HepG2 (cell line): ENCODE measurements at regions of chrX and their contacts with region 1.

Region 1: GRCh38 chrX:153927922-153928760 is 2.1 kb upstream of the ARHGAP4 start:
- DNase-seq: peak; percentile 90
- ATAC-seq: peak; percentile 89
- H3K4me3 ChIP-seq: peak overlapping the region; percentile 71 to 79 (median 76)
- H3K27ac ChIP-seq: peak overlapping the region; percentile 89
- H3K4me1 ChIP-seq: peaks cover 52% of the 10 kb centered on the region
- H3K27me3 ChIP-seq: no peaks in the 10 kb centered on the region
- CTCF ChIP-seq: peak; percentile 31; the same call in 1 of the 2 replicates
- EP300 ChIP-seq: no peak
- POLR2A ChIP-seq: peak in 1 of 2 experiments; percentile 30; a peak in 2 of 4 replicates
- RAD21 ChIP-seq: no peak

Region 2: DNA sequence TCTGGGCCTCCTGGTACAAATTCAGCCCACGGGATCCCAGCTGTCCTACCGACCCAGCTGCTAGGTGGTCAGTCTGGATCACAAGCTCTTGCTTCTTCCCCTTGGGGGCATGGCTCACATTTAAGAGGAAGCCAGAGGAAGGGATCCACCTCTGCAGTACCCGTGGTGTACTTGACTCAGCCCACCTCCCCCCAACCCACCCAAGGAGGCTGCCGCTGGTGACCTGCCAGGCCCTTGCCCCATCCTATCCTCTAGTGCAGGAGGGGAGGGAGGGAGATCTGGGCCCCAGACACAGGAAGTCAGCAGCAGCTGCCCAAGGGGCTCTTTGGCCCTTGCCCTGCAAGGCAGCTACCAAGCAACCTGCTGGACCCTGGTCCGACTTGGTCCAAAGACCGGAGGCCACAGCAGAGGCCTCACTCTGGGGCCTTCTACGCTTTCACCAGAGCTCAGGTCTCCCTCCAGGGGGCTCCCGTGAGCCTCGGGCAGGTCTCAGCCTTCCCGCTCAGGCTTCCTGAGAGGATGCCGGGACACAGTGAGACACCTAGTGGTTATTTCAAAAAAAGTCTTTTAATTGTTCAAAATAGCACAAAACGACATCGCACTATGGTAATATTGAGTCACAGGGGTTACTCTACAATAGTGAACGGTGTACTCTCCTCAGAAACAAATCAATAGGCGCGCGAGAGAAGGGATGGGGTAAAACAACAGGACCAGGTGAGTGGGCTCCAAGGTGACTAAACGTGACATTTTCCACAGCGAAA is 19.0 kb after region 1 on chrX:
- CTCF ChIA-PET with region 1: interaction called, 29 read pairs
- POLR2A ChIA-PET with region 1: interaction called, 82 read pairs
- in situ Hi-C with region 1: no loop called
- intact Hi-C with region 1: loop called (anchors 2 kb)
- DNase-seq: peak; percentile 75
- ATAC-seq: peak; percentile 78
- H3K4me3 ChIP-seq: no peak overlapping the region
- H3K27ac ChIP-seq: peak overlapping the region; percentile 72
- H3K4me1 ChIP-seq: peaks cover 53% of the 10 kb centered on the region
- H3K27me3 ChIP-seq: no peaks in the 10 kb centered on the region
- CTCF ChIP-seq: peak; percentile 87
- EP300 ChIP-seq: peak in 1 of 2 experiments; percentile 38; a peak in 1 of 4 replicates
- POLR2A ChIP-seq: no peak
- RAD21 ChIP-seq: peak; percentile 67; the same call in 1 of the 2 replicates